MCF 10A (cell line): ENCODE measurements at regions of chr13 and their contacts with region 1.

Region 1: DNA sequence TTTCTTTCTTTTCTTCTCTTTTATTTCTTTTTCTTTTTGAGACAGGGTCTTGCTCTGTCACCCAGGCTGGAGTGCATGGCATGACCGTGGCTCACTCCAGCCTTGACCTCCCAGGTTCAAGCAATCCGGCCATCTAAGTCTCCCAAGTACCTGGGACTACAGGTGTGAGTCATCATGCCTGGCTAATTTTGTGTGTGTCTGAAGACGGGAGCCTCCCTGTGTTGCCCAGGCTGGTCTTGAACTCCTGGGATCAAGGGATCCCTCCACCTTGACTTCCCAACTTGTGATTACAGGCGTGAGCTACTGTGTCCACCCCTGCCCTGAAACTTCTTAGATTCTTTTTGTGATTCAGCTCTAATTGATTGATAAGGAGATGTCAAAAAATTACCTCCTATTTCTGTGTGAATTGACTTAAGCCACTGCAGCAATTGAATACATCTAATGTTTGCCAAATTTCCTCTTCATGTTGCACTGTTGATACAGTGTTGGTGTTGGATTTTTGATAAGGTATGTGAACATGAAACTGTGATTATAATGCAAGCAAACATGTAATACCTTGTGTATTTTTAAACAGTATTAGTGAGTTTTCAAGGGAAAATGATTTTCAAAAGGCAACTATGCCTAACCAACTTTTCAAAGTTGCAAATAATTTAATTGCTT is 22.6 kb downstream of the KLF5 start:
- DNase-seq: no peak
- H3K4me3 Mint-ChIP-seq: no peak overlapping the region
- H3K27ac Mint-ChIP-seq: peak overlapping the region; percentile 93
- H3K4me1 Mint-ChIP-seq: peaks cover 20% of the 10 kb centered on the region
- H3K27me3 Mint-ChIP-seq: no peaks in the 10 kb centered on the region
- CTCF ChIP-seq: no peak

Region 2: DNA sequence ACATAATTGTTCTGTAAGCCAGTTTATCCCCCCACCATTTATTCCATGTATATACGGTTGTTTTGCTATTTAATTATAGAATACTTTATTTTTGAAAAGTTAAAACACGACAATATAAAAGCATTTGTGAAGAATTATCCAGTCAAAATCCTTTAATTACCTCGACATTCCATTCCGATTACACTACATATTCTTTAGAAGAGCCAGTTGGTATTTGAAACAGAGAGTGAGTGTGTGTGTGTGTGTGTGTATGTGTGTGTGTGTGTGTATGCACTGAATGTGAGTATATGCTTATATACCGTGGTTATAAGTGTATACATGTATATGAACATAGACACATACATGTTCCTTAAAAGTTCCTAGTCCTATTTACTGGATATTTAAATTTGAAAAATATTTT is 110.4 kb before region 1 on chr13:
- CTCF ChIA-PET with region 1: no interaction called
- POLR2A ChIA-PET with region 1: no interaction called
- intact Hi-C with region 1: no loop called
- DNase-seq: no peak
- H3K4me3 Mint-ChIP-seq: no peak overlapping the region
- H3K27ac Mint-ChIP-seq: peak overlapping the region; percentile 51
- H3K4me1 Mint-ChIP-seq: no peaks in the 10 kb centered on the region
- H3K27me3 Mint-ChIP-seq: no peaks in the 10 kb centered on the region
- CTCF ChIP-seq: no peak

Region 3: DNA sequence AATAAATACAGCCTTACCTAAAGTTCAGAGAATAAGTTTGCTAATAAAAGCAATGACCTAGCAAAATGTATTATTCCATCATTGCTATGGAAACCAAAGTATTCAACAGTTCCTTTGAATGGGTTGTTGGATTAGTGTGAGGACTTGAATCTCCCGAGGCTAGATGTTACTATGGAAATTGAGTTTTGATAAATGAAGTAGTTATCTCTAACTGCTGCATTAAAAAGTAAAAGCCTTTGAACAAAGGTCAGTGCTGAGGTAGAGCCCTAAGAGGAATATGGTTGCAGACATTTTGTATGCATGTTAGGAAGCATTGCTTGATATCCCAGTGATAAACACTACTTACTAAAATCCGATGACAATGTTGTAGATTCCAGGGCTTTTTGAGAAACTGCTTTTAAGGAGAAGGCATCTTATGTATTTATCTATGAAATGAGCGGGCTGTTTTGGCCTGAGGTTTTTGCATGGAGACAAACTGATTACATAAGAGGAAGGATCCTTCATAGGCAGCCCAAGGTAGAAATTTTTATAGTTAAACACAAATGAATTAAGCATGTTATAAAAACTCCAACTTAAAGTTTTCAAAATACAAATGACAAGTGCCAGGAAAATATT is 16.2 kb before region 1 on chr13:
- CTCF ChIA-PET with region 1: no interaction called
- POLR2A ChIA-PET with region 1: interaction called, 157 read pairs
- intact Hi-C with region 1: no loop called
- DNase-seq: no peak
- H3K4me3 Mint-ChIP-seq: peak overlapping the region; percentile 83
- H3K27ac Mint-ChIP-seq: peak overlapping the region; percentile 79
- H3K4me1 Mint-ChIP-seq: peaks cover 35% of the 10 kb centered on the region
- H3K27me3 Mint-ChIP-seq: no peaks in the 10 kb centered on the region
- CTCF ChIP-seq: no peak

Region 4: GRCh38 chr13:73194300-73194699 is 112.9 kb after region 1 on chr13:
- CTCF ChIA-PET with region 1: interaction called, 3 read pairs
- POLR2A ChIA-PET with region 1: interaction called, 12 read pairs
- intact Hi-C with region 1: no loop called
- DNase-seq: no peak
- H3K4me3 Mint-ChIP-seq: no peak overlapping the region
- H3K27ac Mint-ChIP-seq: no peak overlapping the region
- H3K4me1 Mint-ChIP-seq: peaks cover 21% of the 10 kb centered on the region
- H3K27me3 Mint-ChIP-seq: no peaks in the 10 kb centered on the region
- CTCF ChIP-seq: no peak

Region 5: DNA sequence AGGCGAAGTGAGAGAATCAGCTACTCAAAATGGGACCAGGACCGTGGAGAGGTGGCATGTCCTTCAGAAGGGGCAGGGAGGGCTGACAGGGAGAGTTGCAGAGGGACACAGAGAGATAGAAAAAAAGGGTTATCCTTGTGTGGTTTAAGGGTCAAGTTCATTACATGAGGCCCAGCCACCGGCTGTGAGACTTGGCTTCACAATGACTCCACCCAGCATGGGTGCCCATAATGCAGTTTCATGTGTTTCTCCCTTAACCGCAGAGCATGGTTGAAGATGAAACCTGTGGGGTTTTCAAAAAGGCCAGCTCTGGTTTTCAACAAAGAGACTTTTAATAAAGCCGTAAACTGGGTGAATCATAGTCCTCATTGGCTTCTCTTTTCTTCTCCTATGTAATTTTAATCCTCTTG is 142.0 kb after region 1 on chr13:
- CTCF ChIA-PET with region 1: no interaction called
- POLR2A ChIA-PET with region 1: interaction called, 3 read pairs
- intact Hi-C with region 1: loop called (anchors 2 kb)
- DNase-seq: no peak
- H3K4me3 Mint-ChIP-seq: no peak overlapping the region
- H3K27ac Mint-ChIP-seq: peak overlapping the region; percentile 28
- H3K4me1 Mint-ChIP-seq: peaks cover 17% of the 10 kb centered on the region
- H3K27me3 Mint-ChIP-seq: no peaks in the 10 kb centered on the region
- CTCF ChIP-seq: no peak

Region 6: GRCh38 chr13:73883162-73883561 is 801.8 kb after region 1 on chr13:
- CTCF ChIA-PET with region 1: no interaction called
- POLR2A ChIA-PET with region 1: no interaction called
- intact Hi-C with region 1: no loop called
- DNase-seq: no peak
- H3K4me3 Mint-ChIP-seq: no peak overlapping the region
- H3K27ac Mint-ChIP-seq: no peak overlapping the region
- H3K4me1 Mint-ChIP-seq: no peaks in the 10 kb centered on the region
- H3K27me3 Mint-ChIP-seq: no peaks in the 10 kb centered on the region
- CTCF ChIP-seq: no peak

Region 7: GRCh38 chr13:74597526-74597925 is 1516.1 kb after region 1 on chr13:
- CTCF ChIA-PET with region 1: no interaction called
- POLR2A ChIA-PET with region 1: no interaction called
- intact Hi-C with region 1: no loop called
- DNase-seq: no peak
- H3K4me3 Mint-ChIP-seq: no peak overlapping the region
- H3K27ac Mint-ChIP-seq: no peak overlapping the region
- H3K4me1 Mint-ChIP-seq: no peaks in the 10 kb centered on the region
- H3K27me3 Mint-ChIP-seq: no peaks in the 10 kb centered on the region
- CTCF ChIP-seq: no peak